ENCODE measurements at regions of chr1 and their contacts with region 1.

Region 1: DNA sequence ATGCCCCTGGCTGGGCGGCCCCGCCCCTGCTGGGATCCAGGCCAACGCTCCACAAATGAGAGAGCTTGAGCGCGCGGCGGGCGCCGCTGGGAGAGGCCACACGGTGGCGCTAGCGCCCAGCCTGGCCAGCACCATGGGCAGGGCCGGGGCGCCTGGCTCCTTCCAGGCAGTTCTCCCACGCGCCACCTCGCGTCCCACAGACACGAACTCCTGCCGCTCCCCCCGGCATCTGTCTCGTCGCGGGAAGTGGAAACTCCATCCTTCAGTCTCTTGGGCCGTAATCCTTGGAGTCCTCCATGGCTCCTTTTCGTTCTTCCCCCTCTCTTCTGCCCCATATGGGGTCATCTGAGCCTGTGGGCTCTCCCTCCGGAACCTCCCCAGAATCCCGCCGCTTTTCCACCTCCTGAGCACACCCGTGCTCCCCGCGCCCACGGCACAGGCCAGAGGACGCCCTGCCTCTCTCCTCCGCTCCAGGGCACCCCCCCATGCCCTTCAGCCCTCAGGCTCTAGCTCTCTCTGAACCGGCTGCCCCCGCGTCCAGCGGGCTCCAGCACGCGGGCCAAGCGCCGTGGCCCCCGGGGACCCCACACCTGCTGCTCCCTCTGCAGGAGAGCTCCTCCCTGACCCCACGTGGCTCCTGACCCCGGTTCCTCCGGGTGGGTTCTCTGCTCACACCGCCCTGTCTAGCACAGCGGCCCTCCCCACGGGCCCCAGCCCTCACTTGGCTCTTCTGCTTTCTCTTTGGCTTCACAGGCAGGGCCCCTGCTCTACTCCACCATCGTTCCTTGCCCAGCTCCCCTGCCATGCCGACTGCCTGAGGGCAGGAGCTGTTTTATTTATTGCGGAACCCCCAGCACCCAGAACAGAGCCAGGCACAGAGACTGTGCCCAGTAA is 31.9 kb upstream of the EDN2 start:
- DNase-seq: peak; percentile 85 to 99 (median 91)

Region 2: GRCh38 chr1:41268154-41268770 is 248.2 kb before region 1 on chr1:
- intact Hi-C with region 1: loop called (anchors 1 kb)
- DNase-seq: peak; percentile 67 to 97 (median 84)

Region 3: GRCh38 chr1:41454406-41455122 is 61.9 kb before region 1 on chr1:
- intact Hi-C with region 1: loop called (anchors 5 kb)
- DNase-seq: peak; percentile 72 to 97 (median 80)

Region 4: GRCh38 chr1:41776891-41777441 is 260.6 kb after region 1 on chr1:
- intact Hi-C with region 1: loop called (anchors 5 kb)
- DNase-seq: peak; percentile 78 to 99 (median 88)

Measured in posterior cingulate gyrus (tissue), 11 donors.